ENCODE measurements at regions of chr10 and their contacts with region 1.

Region 1: DNA sequence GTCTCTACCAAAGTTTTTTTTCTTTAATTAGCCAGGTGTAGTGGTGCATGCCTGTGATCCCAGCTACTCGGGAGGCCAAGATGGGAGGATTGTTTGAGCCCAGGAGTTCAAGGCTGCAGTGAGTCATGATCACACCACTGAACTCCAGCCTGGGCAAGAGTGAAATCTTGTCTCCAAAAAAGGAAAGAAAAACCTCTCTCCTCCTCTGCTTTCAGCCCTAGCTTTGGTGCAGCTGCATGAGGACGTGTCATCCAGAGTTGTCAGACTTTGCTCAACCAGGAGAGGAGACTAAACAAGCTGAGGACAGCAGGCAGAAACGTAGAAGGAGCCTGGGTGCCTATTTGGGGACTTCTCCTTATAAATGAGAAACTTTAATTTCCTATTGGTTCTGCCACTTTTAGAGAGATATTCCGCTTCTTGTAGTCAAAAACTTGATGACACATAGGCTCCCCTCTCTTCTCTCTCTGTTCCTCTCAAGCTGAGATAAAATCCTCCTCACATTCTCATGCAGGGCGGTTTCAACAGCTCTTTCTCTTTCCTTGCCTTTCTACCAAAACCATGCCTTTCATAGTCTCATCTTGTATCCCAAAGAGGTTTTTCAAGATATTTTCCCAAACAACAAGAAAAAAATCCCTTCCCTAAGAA is 205.4 kb downstream of the ARHGAP12 start:
- DNase-seq: no peak

Region 2: DNA sequence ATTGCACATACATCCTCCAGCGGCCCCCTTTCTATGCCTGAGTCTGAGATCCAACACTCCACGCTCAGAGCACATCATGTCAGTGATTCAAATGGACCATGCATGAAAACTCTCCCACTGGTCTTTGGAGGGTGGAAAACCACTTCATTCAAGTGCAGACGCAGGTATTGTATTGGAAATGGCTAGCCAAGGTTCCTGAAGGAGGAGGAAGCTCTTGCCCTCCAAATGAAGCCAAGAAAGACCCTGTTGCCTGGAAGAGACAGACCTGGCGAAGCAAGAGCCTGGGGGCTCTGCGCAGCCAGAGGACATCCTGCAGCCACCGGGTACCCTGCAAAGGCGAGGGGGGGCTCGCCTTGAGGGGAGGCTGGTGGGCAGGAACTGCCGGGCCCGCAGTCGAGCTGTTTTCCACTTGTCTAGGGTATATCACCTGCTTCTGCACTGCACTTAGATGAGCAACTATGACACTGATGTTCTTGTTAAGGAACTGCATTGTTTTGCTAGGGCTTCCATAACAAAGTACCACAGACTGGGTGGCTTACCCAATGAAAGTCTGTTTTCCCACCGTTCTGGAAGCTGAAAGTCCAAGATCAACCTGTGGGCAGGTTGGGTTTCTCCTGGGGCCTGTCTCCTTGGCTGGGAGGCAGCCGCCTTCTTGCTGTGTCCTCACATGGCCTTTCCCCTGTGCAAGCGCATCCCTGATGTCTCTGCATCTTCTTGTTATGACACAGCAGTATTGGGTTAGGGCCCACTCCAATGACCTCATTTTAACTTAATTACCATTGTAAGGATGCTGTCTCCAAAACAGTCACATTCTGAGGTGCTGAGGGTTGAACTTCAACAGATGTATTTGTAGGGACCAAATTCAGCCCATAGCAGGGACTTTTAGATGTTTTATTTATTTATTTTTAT is 28.0 kb before region 1 on chr10:
- intact Hi-C with region 1: loop called in 1 of 2 experiments (anchors 1 kb)
- DNase-seq: peak; percentile 68